CD4-positive, alpha-beta memory T cell (primary cell): ENCODE measurements at regions of chr11 and their contacts with region 1.

Region 1: DNA sequence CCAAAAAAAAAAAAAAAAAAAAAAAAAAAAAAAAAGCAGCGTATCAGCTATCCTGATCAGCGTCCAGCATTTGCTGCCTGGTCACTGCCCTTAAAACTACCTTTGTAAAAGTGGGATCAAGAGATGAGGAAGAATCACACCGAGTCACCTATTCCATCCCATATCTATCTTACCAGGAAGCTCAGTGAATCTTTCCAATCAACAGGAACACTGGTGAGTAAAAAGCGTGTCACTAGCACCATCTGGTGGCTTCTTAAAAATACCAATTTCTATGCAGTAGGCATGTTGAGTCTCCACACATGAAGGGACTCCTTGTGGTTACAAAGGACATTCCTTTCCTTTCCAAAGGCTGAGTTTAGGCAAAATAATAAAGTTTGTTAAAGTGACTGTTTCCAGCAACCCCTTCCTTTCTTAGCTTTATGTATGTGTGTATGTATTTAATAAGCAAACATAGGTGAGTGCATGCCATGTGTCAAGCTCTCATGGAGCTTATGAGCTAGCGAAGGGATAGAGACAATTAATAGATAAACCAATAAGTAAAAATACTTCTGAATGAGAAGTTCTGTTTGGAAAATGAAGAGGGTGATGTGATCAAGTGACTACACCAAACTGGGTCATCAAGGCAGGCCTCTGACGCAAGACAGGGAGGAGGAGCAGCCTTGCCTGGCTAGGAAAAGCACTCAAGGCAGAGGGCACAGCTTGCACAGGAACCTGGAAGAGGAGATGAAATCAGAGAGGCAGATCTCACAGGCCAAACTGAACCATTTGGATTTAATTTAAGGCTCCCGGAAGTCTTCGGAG is 13.9 kb upstream of the TP53AIP1 start:
- DNase-seq: peak in 4 of 5 donors; percentile 34 to 41 (median 38)
- H3K4me3 ChIP-seq: no peak overlapping the region
- H3K4me3 Mint-ChIP-seq: no peak overlapping the region
- H3K27ac ChIP-seq: no peak overlapping the region
- H3K27ac Mint-ChIP-seq: no peak overlapping the region
- H3K4me1 ChIP-seq: no peaks in the 10 kb centered on the region
- H3K4me1 Mint-ChIP-seq: peaks cover 0 to 2% (median under 1%) of the 10 kb centered on the region in 4 donors
- H3K27me3 ChIP-seq: no peaks in the 10 kb centered on the region
- H3K27me3 Mint-ChIP-seq: peaks cover 6 to 14% of the 10 kb centered on the region in 2 donors

Region 2: GRCh38 chr11:127843483-127844396 is 1112.9 kb before region 1 on chr11:
- CTCF ChIA-PET with region 1: no interaction called
- POLR2A ChIA-PET with region 1: no interaction called
- intact Hi-C with region 1: loop called (anchors 5 kb)
- DNase-seq: peak in 4 of 5 donors; percentile 17 to 26 (median 20)
- H3K4me3 ChIP-seq: no peak overlapping the region
- H3K4me3 Mint-ChIP-seq: no peak overlapping the region
- H3K27ac ChIP-seq: no peak overlapping the region
- H3K27ac Mint-ChIP-seq: no peak overlapping the region
- H3K4me1 ChIP-seq: no peaks in the 10 kb centered on the region
- H3K4me1 Mint-ChIP-seq: no peaks in the 10 kb centered on the region
- H3K27me3 ChIP-seq: no peaks in the 10 kb centered on the region
- H3K27me3 Mint-ChIP-seq: peaks cover 6 to 8% of the 10 kb centered on the region in 2 donors

Region 3: GRCh38 chr11:127890030-127890611 is 1066.5 kb before region 1 on chr11:
- CTCF ChIA-PET with region 1: no interaction called
- POLR2A ChIA-PET with region 1: no interaction called
- intact Hi-C with region 1: no loop called
- DNase-seq: no peak
- H3K4me3 ChIP-seq: no peak overlapping the region
- H3K4me3 Mint-ChIP-seq: no peak overlapping the region
- H3K27ac ChIP-seq: no peak overlapping the region
- H3K27ac Mint-ChIP-seq: no peak overlapping the region
- H3K4me1 ChIP-seq: no peaks in the 10 kb centered on the region
- H3K4me1 Mint-ChIP-seq: no peaks in the 10 kb centered on the region
- H3K27me3 ChIP-seq: no peaks in the 10 kb centered on the region
- H3K27me3 Mint-ChIP-seq: peaks cover 7 to 8% of the 10 kb centered on the region in 2 donors

Region 4: DNA sequence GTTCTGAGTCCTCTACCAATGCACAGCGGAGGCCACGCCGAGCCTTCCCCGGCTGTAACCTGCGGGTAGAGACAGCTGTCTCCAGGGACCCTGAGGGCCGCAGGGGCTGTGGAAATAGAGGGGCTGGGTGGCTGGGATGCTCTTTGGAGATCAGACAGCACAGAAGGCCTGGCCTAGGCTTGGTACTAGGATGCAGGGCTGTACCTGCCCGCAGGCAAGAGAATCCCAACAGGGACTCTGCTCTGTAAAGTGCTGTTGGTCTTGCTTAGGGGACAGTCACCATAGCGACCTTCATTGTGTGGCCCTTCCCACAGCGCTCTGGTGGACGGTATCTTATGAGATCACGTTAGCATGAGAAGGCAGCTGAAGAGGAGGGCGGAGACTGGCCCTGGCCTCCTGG is 76.8 kb before region 1 on chr11:
- CTCF ChIA-PET with region 1: interaction called, 134 read pairs
- POLR2A ChIA-PET with region 1: no interaction called
- intact Hi-C with region 1: loop called (anchors 1 kb)
- DNase-seq: no peak
- H3K4me3 ChIP-seq: no peak overlapping the region
- H3K4me3 Mint-ChIP-seq: no peak overlapping the region
- H3K27ac ChIP-seq: no peak overlapping the region
- H3K27ac Mint-ChIP-seq: no peak overlapping the region
- H3K4me1 ChIP-seq: no peaks in the 10 kb centered on the region
- H3K4me1 Mint-ChIP-seq: peaks cover 0 to 7% (median 2%) of the 10 kb centered on the region in 4 donors
- H3K27me3 ChIP-seq: peaks cover under 1% of the 10 kb centered on the region
- H3K27me3 Mint-ChIP-seq: peaks cover 14 to 19% of the 10 kb centered on the region in 2 donors

Region 5: GRCh38 chr11:128890543-128891368 is 65.8 kb before region 1 on chr11 and contains the start of gene KCNJ5:
- CTCF ChIA-PET with region 1: interaction called, 134 read pairs
- POLR2A ChIA-PET with region 1: no interaction called
- intact Hi-C with region 1: no loop called
- DNase-seq: peak in 2 of 5 donors; percentile 17 to 26
- H3K4me3 ChIP-seq: no peak within 1 kb of the TSS
- H3K4me3 Mint-ChIP-seq: peak within 1 kb of the TSS; percentile 74 to 92 (median 84)
- H3K27ac ChIP-seq: no peak within 1 kb of the TSS
- H3K27ac Mint-ChIP-seq: peak within 1 kb of the TSS in 1 of 7 donors; percentile 81
- H3K4me1 ChIP-seq: peaks cover 12% of the 10 kb centered on the region
- H3K4me1 Mint-ChIP-seq: peaks cover 5 to 24% (median 11%) of the 10 kb centered on the region in 4 donors
- H3K27me3 ChIP-seq: peaks cover 25% of the 10 kb centered on the region
- H3K27me3 Mint-ChIP-seq: peaks cover 31 to 43% of the 10 kb centered on the region in 2 donors
- total RNA-seq, gene KCNJ5: 0.23 to 0.33 TPM

Region 6: GRCh38 chr11:129215506-129216245 is 259.1 kb after region 1 on chr11:
- CTCF ChIA-PET with region 1: no interaction called
- POLR2A ChIA-PET with region 1: no interaction called
- intact Hi-C with region 1: no loop called
- DNase-seq: no peak
- H3K4me3 ChIP-seq: no peak overlapping the region
- H3K4me3 Mint-ChIP-seq: no peak overlapping the region
- H3K27ac ChIP-seq: no peak overlapping the region
- H3K27ac Mint-ChIP-seq: no peak overlapping the region
- H3K4me1 ChIP-seq: no peaks in the 10 kb centered on the region
- H3K4me1 Mint-ChIP-seq: peaks cover 0 to 3% (median 0%) of the 10 kb centered on the region in 4 donors
- H3K27me3 ChIP-seq: no peaks in the 10 kb centered on the region
- H3K27me3 Mint-ChIP-seq: peaks cover 0 to 2% of the 10 kb centered on the region in 2 donors